Activated T-helper 1 cell treated with anti-CD3 and anti-CD28 coated beads, Interleukin-12 subunit alpha, Interleukin-12 subunit beta, Interleukin-2, Interleukin-4 antibody, amounts not matched to agents 30 ng/mL and 10 ng/mL and 1 ng/mL, durations not matched to agents 14 hours and 24 hours and 36 hours (primary cell): ENCODE measurements at regions of chr19 and their contacts with region 1.

Region 1: GRCh38 chr19:45178262-45179071 is at the start of gene BLOC1S3:
- DNase-seq: peak; percentile 100
- H3K4me3 Mint-ChIP-seq: peak within 1 kb of the TSS; percentile 88
- H3K27ac Mint-ChIP-seq: peak within 1 kb of the TSS; percentile 88
- H3K4me1 Mint-ChIP-seq: peaks cover 19% of the 10 kb centered on the region
- H3K27me3 Mint-ChIP-seq: no peaks in the 10 kb centered on the region
- total RNA-seq, gene BLOC1S3: 10.4 and 10.5 TPM in 2 replicates

Region 2: DNA sequence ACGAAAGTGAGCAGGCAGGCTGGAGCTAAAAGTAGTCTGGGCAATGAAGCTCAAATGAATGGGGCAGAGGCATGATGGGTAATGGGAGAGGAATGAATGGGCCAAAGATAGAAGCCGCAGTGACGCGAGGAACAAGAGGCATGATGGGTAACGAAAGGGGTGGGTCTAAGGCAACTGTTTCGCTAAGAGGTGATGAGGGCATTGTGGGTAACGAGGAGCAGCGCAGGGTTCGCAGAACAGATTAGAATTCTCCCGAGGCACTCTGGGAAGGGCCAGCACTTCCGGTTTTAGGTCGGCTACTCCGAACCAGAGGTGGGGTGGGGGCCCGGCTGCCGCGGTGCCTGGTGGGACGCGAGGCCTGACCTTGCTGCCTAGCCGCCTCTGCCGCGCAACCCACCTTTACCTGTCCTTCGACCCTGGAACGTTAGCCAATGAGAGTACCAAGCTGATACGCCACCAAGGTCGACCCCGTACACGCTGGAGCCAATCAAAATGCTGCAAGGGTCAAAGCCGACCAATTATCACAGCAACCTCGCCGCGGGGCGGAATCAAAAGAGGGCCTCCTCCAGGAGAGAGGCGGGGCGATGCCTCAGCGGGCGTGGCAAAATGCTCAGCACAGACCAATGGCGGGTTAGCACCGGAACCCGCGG is 288.0 kb before region 1 on chr19:
- intact Hi-C with region 1: loop called (anchors 1 kb)
- DNase-seq: peak; percentile 100
- H3K4me3 Mint-ChIP-seq: peak overlapping the region; percentile 86
- H3K27ac Mint-ChIP-seq: peak overlapping the region; percentile 96
- H3K4me1 Mint-ChIP-seq: peaks cover 30% of the 10 kb centered on the region
- H3K27me3 Mint-ChIP-seq: no peaks in the 10 kb centered on the region

Region 3: DNA sequence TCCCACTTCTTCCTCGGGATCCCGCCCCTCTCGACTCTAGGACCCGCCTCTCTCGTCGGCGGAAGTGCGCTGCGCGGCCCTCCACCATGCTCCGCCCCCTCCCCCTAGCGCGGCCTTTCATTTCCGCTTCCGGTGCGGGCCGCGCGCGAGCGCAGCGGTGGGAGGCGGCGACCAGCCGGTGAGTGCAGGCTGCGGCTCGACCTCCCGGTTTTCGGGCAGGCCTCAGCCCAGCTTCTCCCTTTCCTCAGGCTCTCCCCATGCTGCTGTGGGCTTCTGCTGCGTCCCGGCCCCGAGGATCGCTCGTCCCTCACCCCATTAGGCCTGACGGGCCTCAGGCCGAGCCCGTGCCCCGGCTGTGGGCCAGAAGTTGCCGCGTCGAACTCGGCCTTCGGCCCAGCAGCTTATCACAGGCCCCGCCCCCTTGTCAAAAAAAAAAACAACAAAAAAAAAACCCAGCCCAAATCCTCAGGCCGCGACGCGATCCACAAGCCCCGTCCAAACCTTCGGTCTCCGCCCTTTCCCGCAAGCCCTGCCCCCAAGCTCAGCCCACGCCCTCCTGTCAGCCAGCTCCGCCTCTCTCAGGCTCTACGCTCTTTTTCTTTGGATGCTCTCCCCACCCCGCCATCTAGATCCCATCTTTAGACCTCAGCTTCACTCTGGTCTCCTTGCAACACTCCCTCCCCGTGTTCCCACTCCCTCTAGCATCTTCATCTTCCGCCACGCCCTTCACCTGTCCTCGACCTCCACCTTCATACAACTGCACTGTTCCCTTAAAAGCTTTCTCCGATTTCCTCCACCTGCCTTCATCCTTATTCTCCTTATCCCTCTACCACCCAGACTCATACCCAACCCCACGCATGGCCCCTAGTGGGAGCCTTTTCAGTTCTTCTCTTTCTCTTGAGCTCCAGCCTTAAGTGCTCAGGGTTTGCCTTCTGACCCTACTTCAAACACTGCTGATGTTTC is 139.3 kb before region 1 on chr19 and contains the start of gene CLASRP:
- intact Hi-C with region 1: loop called (anchors 1 kb)
- DNase-seq: peak; percentile 87
- H3K4me3 Mint-ChIP-seq: peak within 1 kb of the TSS; percentile 93
- H3K27ac Mint-ChIP-seq: peak within 1 kb of the TSS; percentile 95
- H3K4me1 Mint-ChIP-seq: peaks cover 23% of the 10 kb centered on the region
- H3K27me3 Mint-ChIP-seq: no peaks in the 10 kb centered on the region
- total RNA-seq, gene CLASRP: 106 and 116 TPM in 2 replicates

Region 4: DNA sequence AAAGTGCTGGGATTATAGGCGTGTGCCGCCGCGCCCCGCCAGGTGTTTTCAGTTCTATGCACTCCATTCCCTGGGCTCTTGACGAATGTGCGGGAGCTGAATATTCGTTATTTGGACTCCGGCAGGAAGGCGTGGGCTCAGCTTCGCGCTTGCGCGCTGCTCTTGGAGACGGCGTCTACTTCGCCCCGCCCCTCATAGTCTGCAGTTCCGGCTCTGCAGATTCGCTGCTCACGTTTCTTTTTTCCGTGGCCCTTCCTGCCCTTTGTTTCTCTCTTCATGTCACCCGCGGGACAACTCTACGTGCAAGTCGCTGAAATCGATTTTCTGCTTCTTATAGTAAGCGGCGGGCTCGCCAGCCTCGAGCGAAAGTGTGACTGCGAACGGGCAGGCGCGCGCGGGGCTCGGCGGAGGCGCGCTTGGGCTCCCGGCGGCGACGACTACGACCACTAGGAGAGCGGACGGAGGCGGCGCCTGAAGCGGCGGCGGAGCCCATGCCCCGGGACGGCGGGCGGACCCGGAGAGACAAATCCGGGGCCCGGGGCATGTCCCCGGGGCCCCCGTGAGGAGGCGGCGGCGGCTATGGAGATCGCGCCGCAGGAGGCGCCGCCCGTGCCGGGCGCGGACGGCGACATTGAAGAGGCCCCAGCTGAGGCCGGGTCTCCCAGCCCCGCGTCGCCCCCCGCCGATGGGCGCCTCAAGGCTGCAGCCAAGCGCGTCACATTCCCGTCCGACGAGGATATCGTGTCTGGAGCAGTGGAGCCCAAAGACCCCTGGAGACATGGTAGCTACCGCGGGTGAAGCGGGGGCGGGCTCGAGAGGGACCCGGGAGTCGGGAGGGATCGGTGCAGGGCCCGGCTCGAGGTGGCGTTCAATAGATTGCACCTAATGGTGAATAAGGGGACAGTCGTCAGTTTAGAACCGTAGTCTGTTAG is 85.5 kb before region 1 on chr19 and contains the start of gene PPP1R37:
- intact Hi-C with region 1: loop called (anchors 1 kb)
- DNase-seq: peak; percentile 92
- H3K4me3 Mint-ChIP-seq: peak within 1 kb of the TSS; percentile 84
- H3K27ac Mint-ChIP-seq: peak within 1 kb of the TSS; percentile 97
- H3K4me1 Mint-ChIP-seq: peaks cover 46% of the 10 kb centered on the region
- H3K27me3 Mint-ChIP-seq: no peaks in the 10 kb centered on the region
- total RNA-seq, gene PPP1R37: 20.4 and 20.5 TPM in 2 replicates

Region 5: DNA sequence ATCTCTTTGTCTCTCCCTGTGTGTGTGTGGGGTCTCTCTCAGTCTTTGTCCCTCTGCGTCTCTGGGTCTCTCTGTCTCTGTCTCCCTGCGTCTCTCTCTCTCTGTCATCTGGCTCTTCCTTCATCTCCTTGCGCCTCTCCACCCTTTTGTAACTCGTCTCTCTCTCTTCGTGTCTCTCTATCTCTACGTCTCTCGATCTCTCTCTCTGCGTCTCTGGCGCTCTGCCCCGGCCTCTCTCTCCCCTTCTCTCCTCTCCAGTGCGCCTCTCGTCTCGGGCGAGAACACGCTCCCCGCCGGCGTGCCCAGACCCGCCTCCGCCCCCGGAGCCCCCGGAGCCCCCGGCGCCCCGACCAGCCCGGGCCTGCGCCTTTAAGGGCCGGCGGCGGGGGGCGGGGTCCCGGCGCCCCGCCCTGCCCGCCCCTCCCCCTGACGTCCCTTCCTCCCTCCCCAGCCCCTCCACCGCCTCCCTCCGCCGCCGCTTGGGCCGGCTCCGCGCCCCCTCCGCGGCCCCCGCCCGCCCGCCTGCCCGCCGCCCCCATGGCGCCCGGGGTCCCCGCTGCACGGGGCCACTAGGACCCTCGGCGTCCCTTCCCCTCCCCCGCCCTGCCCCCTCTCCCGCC is 72.5 kb after region 1 on chr19 and contains the start of gene MARK4:
- intact Hi-C with region 1: loop called (anchors 1 kb)
- DNase-seq: peak; percentile 40
- H3K4me3 Mint-ChIP-seq: peak within 1 kb of the TSS; percentile 87
- H3K27ac Mint-ChIP-seq: peak within 1 kb of the TSS; percentile 70
- H3K4me1 Mint-ChIP-seq: peaks cover 19% of the 10 kb centered on the region
- H3K27me3 Mint-ChIP-seq: peaks cover 2% of the 10 kb centered on the region
- total RNA-seq, gene MARK4: 27.1 and 27.2 TPM in 2 replicates

Region 6: GRCh38 chr19:45423589-45424190 is 245.2 kb after region 1 on chr19 and contains the start of gene ERCC1:
- intact Hi-C with region 1: loop called (anchors 5 kb)
- DNase-seq: peak; percentile 82
- H3K4me3 Mint-ChIP-seq: peak within 1 kb of the TSS; percentile 97
- H3K27ac Mint-ChIP-seq: peak within 1 kb of the TSS; percentile 95
- H3K4me1 Mint-ChIP-seq: peaks cover 50% of the 10 kb centered on the region
- H3K27me3 Mint-ChIP-seq: peaks cover 9% of the 10 kb centered on the region
- total RNA-seq, gene ERCC1: 143 and 152 TPM in 2 replicates

Region 7: GRCh38 chr19:45902651-45903625 is 724.5 kb after region 1 on chr19:
- intact Hi-C with region 1: loop called (anchors 5 kb)
- DNase-seq: peak; percentile 100
- H3K4me3 Mint-ChIP-seq: peak overlapping the region; percentile 88
- H3K27ac Mint-ChIP-seq: peak overlapping the region; percentile 80
- H3K4me1 Mint-ChIP-seq: peaks cover 16% of the 10 kb centered on the region
- H3K27me3 Mint-ChIP-seq: peaks cover 1% of the 10 kb centered on the region